ENCODE measurements at regions of chr3 and their contacts with region 1.

Region 1: DNA sequence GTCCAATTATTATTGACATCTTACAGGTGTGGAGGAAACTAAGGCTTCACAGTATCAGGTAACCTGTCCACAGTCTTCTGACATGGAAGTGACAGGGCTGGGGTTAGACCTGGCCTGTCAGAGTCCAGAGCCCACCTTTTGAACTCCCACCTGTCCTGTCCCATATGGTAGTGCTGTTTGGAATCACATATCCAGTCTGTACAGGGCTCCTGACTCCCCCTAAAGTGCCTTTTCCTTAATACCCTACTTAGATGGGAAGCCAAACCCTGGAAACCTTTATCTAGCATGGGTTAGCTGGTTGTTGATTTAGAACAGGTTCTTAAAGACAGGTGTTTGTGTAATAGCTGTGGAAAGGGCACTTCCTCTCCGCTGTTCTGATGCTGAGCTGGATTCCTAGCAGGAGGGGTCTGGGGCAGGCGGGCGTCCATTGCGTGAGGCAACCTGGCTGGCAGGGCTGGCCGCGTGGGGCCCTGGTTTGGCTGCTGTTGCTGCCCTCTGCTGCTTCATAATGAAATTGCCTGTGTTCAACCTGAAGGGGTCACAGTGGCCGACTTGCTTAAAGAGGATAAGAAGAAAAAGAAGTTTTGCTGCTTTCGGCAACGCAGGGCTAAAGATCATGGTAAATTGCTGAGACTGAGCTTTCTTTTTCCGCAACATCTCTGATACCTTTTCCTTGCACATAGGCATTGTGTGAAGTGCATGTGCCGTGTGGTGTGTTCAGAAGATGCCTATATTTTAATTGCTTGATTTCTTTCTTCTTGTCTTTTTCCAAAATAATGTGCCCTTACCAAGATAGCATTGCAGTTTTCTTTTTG is 136.2 kb downstream of the CHDH start:
- DNase-seq: peak; percentile 67 to 80 (median 76)
- ATAC-seq: peak; percentile 75 to 80 (median 78)
- H3K4me3 ChIP-seq: no peak overlapping the region
- H3K27ac ChIP-seq: no peak overlapping the region
- H3K4me1 ChIP-seq: peaks cover 0 to 20% (median 4%) of the 10 kb centered on the region in 4 donors
- H3K27me3 ChIP-seq: no peaks in the 10 kb centered on the region
- CTCF ChIP-seq: peak; percentile 80 to 85 (median 81)
- POLR2A ChIP-seq: no peak

Region 2: GRCh38 chr3:53264718-53265117 is 445.3 kb before region 1 on chr3:
- intact Hi-C with region 1: no loop called
- DNase-seq: peak in 2 of 3 donors; percentile 59 to 82
- ATAC-seq: peak; percentile 82 to 93 (median 87)
- H3K4me3 ChIP-seq: no peak overlapping the region
- H3K27ac ChIP-seq: peak overlapping the region in 2 of 3 donors; percentile 42 to 85
- H3K4me1 ChIP-seq: peaks cover 0 to 35% (median 10%) of the 10 kb centered on the region in 4 donors
- H3K27me3 ChIP-seq: no peaks in the 10 kb centered on the region
- CTCF ChIP-seq: no peak
- POLR2A ChIP-seq: no peak

Region 3: GRCh38 chr3:53303957-53304356 is 406.1 kb before region 1 on chr3:
- intact Hi-C with region 1: loop called in 1 of 2 experiments (anchors 10 kb)
- DNase-seq: no peak
- ATAC-seq: peak; percentile 52 to 74 (median 60)
- H3K4me3 ChIP-seq: no peak overlapping the region
- H3K27ac ChIP-seq: peak overlapping the region in 1 of 3 donors; percentile 26
- H3K4me1 ChIP-seq: peaks cover 0 to 26% (median 0%) of the 10 kb centered on the region in 4 donors
- H3K27me3 ChIP-seq: no peaks in the 10 kb centered on the region
- CTCF ChIP-seq: no peak
- POLR2A ChIP-seq: no peak

Region 4: GRCh38 chr3:53350652-53351051 is 359.4 kb before region 1 on chr3:
- intact Hi-C with region 1: no loop called
- DNase-seq: no peak
- ATAC-seq: no peak
- H3K4me3 ChIP-seq: no peak overlapping the region
- H3K27ac ChIP-seq: no peak overlapping the region
- H3K4me1 ChIP-seq: no peaks in the 10 kb centered on the region
- H3K27me3 ChIP-seq: no peaks in the 10 kb centered on the region
- CTCF ChIP-seq: peak in 1 of 4 donors; percentile 16
- POLR2A ChIP-seq: no peak

Region 5: DNA sequence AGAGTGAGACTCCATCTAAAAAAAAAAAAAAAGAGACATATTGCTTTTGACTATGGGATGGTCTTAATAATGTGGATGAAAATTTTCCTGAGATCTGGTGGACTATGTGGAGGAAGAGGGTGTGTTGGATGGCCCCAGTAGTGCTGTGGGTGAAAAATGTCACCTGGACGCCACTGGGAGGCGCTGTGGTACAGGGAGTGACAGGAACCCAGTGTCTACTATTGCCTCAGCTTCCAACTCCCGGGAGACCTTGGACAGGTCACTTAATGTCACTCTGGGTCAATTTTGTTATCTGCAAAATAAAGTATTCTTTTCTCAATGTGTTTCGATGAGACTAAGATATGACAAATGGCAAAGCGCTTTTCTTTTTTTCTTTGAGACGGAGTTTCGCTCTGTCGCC is 335.0 kb before region 1 on chr3:
- intact Hi-C with region 1: loop called (anchors 10 kb)
- DNase-seq: peak; percentile 81 to 84 (median 84)
- ATAC-seq: peak; percentile 100
- H3K4me3 ChIP-seq: no peak overlapping the region
- H3K27ac ChIP-seq: no peak overlapping the region
- H3K4me1 ChIP-seq: no peaks in the 10 kb centered on the region
- H3K27me3 ChIP-seq: no peaks in the 10 kb centered on the region
- CTCF ChIP-seq: peak; percentile 76 to 95 (median 88)
- POLR2A ChIP-seq: no peak

Region 6: GRCh38 chr3:53650424-53650823 is 59.6 kb before region 1 on chr3:
- intact Hi-C with region 1: no loop called
- DNase-seq: no peak
- ATAC-seq: no peak
- H3K4me3 ChIP-seq: no peak overlapping the region
- H3K27ac ChIP-seq: no peak overlapping the region
- H3K4me1 ChIP-seq: no peaks in the 10 kb centered on the region
- H3K27me3 ChIP-seq: no peaks in the 10 kb centered on the region
- CTCF ChIP-seq: no peak
- POLR2A ChIP-seq: no peak

Region 7: GRCh38 chr3:53780806-53781205 is 70.7 kb after region 1 on chr3:
- intact Hi-C with region 1: no loop called
- DNase-seq: no peak
- ATAC-seq: no peak
- H3K4me3 ChIP-seq: no peak overlapping the region
- H3K27ac ChIP-seq: no peak overlapping the region
- H3K4me1 ChIP-seq: peaks cover 0 to 18% (median 6%) of the 10 kb centered on the region in 4 donors
- H3K27me3 ChIP-seq: no peaks in the 10 kb centered on the region
- CTCF ChIP-seq: no peak
- POLR2A ChIP-seq: no peak

Measured in right lobe of liver (tissue), 6 donors.